ENCODE measurements at regions of chr12 and their contacts with region 1.

Region 1: DNA sequence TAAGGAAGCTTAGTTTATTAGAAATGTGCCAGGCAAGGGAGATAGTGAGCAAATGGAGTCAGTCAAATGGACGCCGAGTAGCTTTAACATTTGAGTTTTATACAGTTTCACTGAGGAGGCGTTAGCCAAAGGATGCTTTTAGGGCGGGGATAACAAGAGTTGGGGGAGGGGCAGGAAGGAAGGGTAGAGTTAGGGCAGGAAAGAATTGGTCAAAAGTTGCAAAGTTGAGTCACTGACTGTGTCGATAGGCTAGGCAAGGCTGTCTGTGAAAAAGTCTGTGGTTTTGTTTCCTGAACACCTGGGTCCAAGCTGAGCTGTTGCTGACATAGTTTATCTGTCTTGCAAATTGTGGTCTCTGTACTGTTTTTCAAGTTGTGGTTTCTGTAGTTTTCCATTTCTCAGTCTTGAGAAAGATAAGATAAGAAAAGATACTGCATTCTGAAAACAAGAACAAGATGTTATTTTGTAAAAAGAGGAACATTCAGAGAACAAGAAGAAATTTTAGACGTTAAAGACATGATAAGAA is 62.6 kb upstream of the RESF1 start:
- DNase-seq: peak; percentile 86
- H3K4me3 Mint-ChIP-seq: peak overlapping the region; percentile 43
- H3K27ac Mint-ChIP-seq: peak overlapping the region; percentile 89
- H3K4me1 Mint-ChIP-seq: peaks cover 31% of the 10 kb centered on the region
- H3K27me3 Mint-ChIP-seq: no peaks in the 10 kb centered on the region

Region 2: DNA sequence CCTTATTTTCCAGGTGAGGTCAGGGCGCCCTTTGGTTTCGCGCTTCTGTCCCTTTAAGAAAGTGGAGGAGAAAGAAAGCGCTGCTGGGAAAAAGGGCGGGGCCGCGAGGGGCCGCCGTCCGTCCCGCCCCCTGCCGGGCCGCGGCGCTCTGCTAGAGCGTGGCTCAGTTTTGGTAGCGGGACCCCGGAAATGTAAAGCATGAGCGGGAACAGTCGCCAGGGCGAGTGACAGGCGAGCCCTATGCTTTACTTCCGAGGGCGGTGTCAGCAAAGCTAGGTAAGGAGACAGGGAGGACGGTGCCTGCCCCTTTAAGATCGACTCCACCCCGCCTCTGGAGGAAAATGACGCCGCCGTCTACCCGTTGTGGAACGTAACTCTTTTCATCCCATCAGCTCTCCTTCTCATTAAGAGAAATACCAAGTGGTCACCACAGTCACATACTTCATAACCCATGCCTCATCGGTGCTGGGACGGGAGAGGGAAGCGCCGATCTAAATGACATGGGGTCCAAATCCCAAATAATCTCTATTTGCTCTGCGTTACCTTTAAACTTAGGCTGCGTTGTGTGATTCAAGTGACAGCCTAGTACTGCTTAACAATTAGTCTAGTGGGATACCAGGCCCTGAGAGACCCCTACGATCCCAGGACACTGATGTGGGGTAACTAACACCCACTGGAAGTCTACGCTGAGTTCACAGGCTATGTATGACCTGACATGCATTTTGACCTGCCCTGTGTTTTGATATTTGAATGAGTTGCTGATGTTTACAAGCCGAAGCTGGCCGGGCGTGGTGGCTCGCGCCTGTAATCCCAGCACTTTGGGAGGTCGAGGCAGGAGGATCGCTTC is 237.3 kb before region 1 on chr12 and contains the start of gene ETFBKMT:
- intact Hi-C with region 1: loop called (anchors 1 kb)
- DNase-seq: peak; percentile 95
- H3K4me3 Mint-ChIP-seq: peak within 1 kb of the TSS; percentile 95
- H3K27ac Mint-ChIP-seq: peak within 1 kb of the TSS; percentile 97
- H3K4me1 Mint-ChIP-seq: peaks cover 5% of the 10 kb centered on the region
- H3K27me3 Mint-ChIP-seq: no peaks in the 10 kb centered on the region
- total RNA-seq, gene ETFBKMT: 0.37 and 0.39 TPM in 2 replicates

Region 3: GRCh38 chr12:31728917-31729640 is 167.5 kb before region 1 on chr12 and contains the start of gene AMN1:
- intact Hi-C with region 1: loop called (anchors 2 kb)
- DNase-seq: peak; percentile 100
- H3K4me3 Mint-ChIP-seq: peak within 1 kb of the TSS; percentile 98
- H3K27ac Mint-ChIP-seq: peak within 1 kb of the TSS; percentile 99
- H3K4me1 Mint-ChIP-seq: peaks cover 35% of the 10 kb centered on the region
- H3K27me3 Mint-ChIP-seq: no peaks in the 10 kb centered on the region
- total RNA-seq, gene AMN1: 1.8 and 2.8 TPM in 2 replicates

Region 4: GRCh38 chr12:31804185-31804504 is 92.4 kb before region 1 on chr12:
- intact Hi-C with region 1: loop called (anchors 1 kb)
- DNase-seq: no peak
- H3K4me3 Mint-ChIP-seq: peak overlapping the region; percentile 30
- H3K27ac Mint-ChIP-seq: peak overlapping the region; percentile 40
- H3K4me1 Mint-ChIP-seq: peaks cover 28% of the 10 kb centered on the region
- H3K27me3 Mint-ChIP-seq: peaks cover 3% of the 10 kb centered on the region

Region 5: DNA sequence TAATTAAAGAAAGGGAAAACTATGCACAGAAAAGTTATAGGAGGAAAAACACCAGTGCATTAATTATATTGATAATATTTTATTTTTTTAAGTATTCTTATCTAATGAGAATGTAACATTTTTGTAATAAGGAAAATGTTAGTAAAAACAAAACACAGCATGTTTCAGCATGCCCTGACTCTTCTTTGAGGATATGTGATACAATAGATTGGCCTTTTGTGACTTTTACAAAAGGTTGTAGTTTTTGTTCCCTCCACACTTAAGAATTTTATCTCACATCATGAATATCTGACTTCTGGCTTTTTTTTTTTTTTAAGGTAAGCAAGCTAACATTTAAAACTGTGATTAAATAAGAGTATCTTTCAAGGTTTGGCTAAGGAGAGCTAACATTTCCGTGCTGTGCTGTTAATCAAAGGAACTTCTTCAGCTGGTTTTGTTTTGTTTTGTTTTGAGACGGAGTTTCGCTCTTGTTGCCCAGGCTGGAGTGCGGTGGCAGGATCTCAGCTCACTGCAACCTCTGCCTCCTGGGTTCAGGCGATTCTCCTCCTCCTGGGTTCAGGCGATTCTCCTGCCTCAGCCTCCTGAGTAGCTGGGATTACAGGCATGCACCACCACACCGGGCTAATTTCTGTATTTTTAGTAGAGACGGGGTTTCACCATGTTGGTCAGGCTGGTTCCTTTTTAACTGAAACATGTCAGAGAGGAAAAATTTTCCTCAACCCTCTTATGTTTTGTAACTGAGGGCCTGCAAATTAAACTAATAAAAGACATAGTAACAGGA is 31.9 kb after region 1 on chr12:
- intact Hi-C with region 1: loop called (anchors 2 kb)
- DNase-seq: peak; percentile 11
- H3K4me3 Mint-ChIP-seq: peak overlapping the region; percentile 66
- H3K27ac Mint-ChIP-seq: peak overlapping the region; percentile 88
- H3K4me1 Mint-ChIP-seq: peaks cover 28% of the 10 kb centered on the region
- H3K27me3 Mint-ChIP-seq: no peaks in the 10 kb centered on the region

Region 6: GRCh38 chr12:32025906-32026305 is 129.3 kb after region 1 on chr12:
- intact Hi-C with region 1: loop called (anchors 1 kb)
- DNase-seq: peak; percentile 61
- H3K4me3 Mint-ChIP-seq: no peak overlapping the region
- H3K27ac Mint-ChIP-seq: peak overlapping the region; percentile 66
- H3K4me1 Mint-ChIP-seq: peaks cover 23% of the 10 kb centered on the region
- H3K27me3 Mint-ChIP-seq: no peaks in the 10 kb centered on the region